ENCODE measurements at regions of chr15 and their contacts with region 1.

Region 1: DNA sequence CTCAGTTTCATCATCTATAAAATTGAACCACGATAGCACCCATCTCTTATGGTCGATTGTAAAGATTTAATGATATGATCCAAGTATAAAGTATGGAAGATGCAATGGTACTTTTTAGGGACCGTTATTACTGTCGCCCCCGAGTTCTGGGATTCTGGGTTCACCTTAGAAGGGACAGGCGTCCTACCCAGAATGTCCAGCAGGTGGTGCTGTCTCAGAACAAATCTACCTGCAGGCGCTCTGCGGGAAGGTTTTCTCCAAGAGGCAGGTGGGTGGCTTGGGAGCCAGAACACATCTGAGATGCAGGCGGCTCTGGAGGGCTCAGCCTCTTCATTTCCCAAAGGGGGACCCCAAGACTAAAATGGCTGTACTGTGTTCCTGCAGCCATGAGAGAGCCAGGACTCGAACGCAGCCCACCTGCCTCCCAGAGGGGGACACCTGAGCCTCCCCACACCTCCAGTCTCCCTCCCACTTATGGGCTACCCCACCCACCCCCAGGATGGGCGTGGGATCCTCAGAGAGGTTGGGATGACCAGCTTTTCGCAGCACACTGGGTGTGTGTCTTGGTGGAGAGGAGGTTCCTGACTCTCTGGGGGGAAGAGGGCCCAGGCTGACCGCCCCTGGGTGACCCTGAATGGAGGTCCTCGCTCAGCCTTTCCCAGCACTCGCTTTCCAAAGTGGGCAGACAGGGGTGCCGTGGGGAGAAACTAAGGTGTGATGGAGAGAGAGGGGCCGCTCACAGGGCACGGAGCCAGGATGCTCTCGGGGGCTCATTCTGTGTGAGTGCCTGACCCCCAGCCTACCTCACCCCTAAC is 28.1 kb upstream of the CORO2B start:
- DNase-seq: peak; percentile 74
- H3K4me3 ChIP-seq: peak overlapping the region in 1 of 2 experiments; percentile 34; a peak in 1 of 4 replicates
- H3K27ac ChIP-seq: no peak overlapping the region
- H3K4me1 ChIP-seq: peaks cover 4 to 5% of the 10 kb centered on the region in 2 experiments; a peak in 3 of 4 replicates
- H3K27me3 ChIP-seq: no peaks in the 10 kb centered on the region
- CTCF ChIP-seq: peak; percentile 92
- EP300 ChIP-seq: no peak
- RAD21 ChIP-seq: peak; percentile 80

Region 2: GRCh38 chr15:68106656-68107055 is 444.0 kb before region 1 on chr15:
- CTCF ChIA-PET with region 1: no interaction called
- POLR2A ChIA-PET with region 1: no interaction called
- DNase-seq: no peak
- H3K4me3 ChIP-seq: no peak overlapping the region; a peak in 1 of 4 replicates
- H3K27ac ChIP-seq: peak overlapping the region in 1 of 2 experiments; percentile 23; a peak in 2 of 4 replicates
- H3K4me1 ChIP-seq: peaks cover 0 to 8% of the 10 kb centered on the region in 2 experiments; a peak in 1 of 4 replicates
- H3K27me3 ChIP-seq: no peaks in the 10 kb centered on the region
- CTCF ChIP-seq: no peak
- EP300 ChIP-seq: no peak
- RAD21 ChIP-seq: no peak

Region 3: DNA sequence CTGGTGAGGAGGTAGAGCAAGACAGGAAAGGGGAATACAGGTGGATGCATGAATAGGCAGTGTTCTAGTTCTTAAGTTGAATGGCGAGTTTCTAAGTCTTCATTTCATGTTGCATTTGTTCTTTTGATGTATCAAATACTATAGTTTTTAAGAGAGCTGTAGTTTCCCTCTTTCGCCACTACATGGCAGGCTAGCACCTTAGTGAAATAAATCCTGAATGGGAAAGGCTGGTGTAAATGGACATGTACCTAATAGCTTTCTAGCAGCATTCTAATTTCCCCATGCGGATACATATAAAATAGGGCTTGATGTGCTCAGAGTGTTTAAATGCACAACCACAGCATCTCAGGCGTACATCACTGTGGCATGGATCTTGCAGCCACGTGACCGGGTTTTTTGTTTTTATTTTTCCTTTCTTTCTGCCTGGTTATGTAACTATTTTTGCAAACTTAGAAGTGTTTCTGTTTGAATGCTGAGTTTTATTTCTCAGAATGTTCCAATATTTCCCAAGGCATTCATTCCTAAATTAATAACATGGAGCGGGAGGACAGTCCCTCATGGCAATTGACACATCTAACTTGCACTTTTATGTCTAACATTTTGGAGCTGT is 297.7 kb before region 1 on chr15:
- CTCF ChIA-PET with region 1: interaction called, 10 read pairs
- POLR2A ChIA-PET with region 1: no interaction called
- DNase-seq: peak; percentile 75
- H3K4me3 ChIP-seq: no peak overlapping the region; a peak in 1 of 4 replicates
- H3K27ac ChIP-seq: no peak overlapping the region
- H3K4me1 ChIP-seq: no peaks in the 10 kb centered on the region
- H3K27me3 ChIP-seq: no peaks in the 10 kb centered on the region
- CTCF ChIP-seq: peak; percentile 94
- EP300 ChIP-seq: no peak
- RAD21 ChIP-seq: peak; percentile 93

Region 4: DNA sequence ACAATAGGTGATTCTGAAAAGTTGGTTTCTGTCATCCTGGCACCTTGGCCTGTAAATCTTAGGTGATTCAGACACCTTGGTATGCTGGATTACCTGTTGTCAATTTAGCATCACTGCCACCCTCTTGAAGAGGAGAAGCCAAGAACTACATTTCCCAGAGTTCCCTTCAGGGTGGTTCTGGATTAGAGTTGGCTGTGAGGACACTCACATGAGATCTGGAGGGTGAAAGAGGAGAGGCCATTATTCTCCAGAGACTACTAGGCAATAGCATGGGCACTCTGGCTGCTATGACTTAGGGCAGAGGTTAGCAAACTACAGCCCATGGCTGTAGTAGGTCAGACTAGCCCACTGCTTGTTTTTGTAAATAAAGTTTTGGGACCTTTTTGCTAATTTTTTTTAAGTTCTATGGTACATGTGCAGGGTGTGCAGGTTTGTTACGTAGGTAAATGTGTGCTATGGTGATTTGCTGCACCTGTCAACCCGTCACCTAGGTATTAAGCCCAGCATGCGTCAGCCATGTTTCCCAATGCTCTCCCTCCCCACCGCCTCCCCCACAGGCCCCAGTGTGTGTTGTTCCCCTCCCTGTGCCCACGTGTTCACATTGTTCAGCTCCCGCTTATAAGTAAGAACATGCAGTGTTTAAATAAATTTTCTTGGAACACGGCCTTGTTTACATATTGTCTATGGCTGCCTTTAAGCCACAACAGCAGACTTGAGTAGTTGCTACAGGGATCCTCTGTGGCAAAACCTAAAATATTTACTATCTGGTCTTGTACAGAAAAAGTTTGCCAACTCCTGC is 13.4 kb before region 1 on chr15:
- CTCF ChIA-PET with region 1: interaction called, 55 read pairs
- POLR2A ChIA-PET with region 1: no interaction called
- DNase-seq: no peak
- H3K4me3 ChIP-seq: no peak overlapping the region
- H3K27ac ChIP-seq: peak overlapping the region in 1 of 2 experiments; percentile 81; a peak in 2 of 4 replicates
- H3K4me1 ChIP-seq: peaks cover 0 to 4% of the 10 kb centered on the region in 2 experiments; a peak in 1 of 4 replicates
- H3K27me3 ChIP-seq: no peaks in the 10 kb centered on the region
- CTCF ChIP-seq: no peak
- EP300 ChIP-seq: no peak
- RAD21 ChIP-seq: no peak

Region 5: GRCh38 chr15:68578174-68578979 is 27.7 kb after region 1 on chr15:
- CTCF ChIA-PET with region 1: interaction called, 23 read pairs
- POLR2A ChIA-PET with region 1: no interaction called
- DNase-seq: peak; percentile 81
- H3K4me3 ChIP-seq: peak overlapping the region; percentile 52 to 78
- H3K27ac ChIP-seq: no peak overlapping the region
- H3K4me1 ChIP-seq: peaks cover 0 to 12% of the 10 kb centered on the region in 2 experiments; a peak in 1 of 4 replicates
- H3K27me3 ChIP-seq: no peaks in the 10 kb centered on the region
- CTCF ChIP-seq: peak; percentile 58
- EP300 ChIP-seq: no peak
- RAD21 ChIP-seq: peak; percentile 50

Region 6: DNA sequence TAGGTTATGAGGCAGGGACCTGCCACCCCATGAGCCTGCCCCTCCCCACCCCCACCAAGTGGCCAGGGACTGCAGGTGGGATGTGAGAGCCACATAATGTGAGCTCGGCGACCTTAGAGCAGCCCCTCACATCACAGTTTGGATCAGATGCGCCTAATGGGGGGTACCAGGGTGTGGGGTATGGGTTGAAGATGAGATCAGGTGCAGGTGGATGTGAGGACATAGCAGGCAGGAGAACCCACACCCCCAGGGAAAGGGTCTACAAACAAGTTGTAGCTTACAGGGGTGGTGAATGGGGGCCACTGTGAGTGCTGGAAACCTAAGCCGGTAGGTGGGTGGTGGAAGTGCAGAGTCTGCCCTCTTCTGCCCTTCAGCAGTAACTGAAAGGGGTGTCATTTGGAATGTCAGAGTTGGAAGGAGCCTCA is 122.1 kb after region 1 on chr15:
- CTCF ChIA-PET with region 1: interaction called, 464 read pairs
- POLR2A ChIA-PET with region 1: no interaction called
- DNase-seq: no peak
- H3K4me3 ChIP-seq: no peak overlapping the region
- H3K27ac ChIP-seq: no peak overlapping the region
- H3K4me1 ChIP-seq: no peaks in the 10 kb centered on the region; a peak in 1 of 4 replicates
- H3K27me3 ChIP-seq: no peaks in the 10 kb centered on the region
- CTCF ChIP-seq: peak; percentile 23; the same call in 1 of the 2 replicates
- EP300 ChIP-seq: no peak
- RAD21 ChIP-seq: peak; percentile 60

Region 7: DNA sequence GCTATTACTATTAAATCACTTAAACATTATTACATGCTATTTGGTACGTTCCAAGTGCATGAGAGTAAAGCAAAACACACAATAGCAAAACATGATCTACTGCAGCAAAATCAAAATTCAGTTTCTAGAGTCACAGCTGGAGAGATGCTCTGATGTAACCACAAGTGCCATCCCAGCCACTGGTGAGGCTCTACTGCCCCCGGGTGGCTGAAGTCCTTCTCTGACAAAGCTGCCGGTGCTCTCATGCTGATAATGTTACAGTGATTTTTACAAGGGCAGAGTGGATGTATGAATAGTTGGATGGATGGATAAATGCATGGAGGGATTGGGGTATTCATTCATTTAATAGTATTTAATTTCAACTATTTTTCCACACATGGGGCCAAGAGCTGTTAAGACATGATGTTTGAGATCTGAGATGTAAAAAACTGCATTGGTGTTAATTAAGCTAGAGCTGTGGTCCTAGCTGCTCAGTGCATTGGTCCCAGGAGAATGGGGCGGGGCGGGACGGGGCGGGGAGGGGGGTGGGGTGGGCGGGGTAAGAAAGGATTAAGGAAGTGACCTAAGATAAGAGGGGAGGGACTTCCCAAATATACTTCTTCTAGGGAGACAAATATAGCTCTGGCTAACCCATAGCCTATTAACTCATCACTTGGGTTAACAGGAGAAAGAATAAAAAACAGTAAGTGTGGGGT is 374.3 kb after region 1 on chr15:
- CTCF ChIA-PET with region 1: interaction called, 71 read pairs
- POLR2A ChIA-PET with region 1: no interaction called
- DNase-seq: peak; percentile 86
- H3K4me3 ChIP-seq: peak overlapping the region in 1 of 2 experiments; percentile 24; a peak in 1 of 4 replicates
- H3K27ac ChIP-seq: no peak overlapping the region
- H3K4me1 ChIP-seq: peaks cover 0 to 2% of the 10 kb centered on the region in 2 experiments; a peak in 1 of 4 replicates
- H3K27me3 ChIP-seq: peaks cover 9% of the 10 kb centered on the region; the same call in 1 of the 2 replicates
- CTCF ChIP-seq: peak; percentile 91
- EP300 ChIP-seq: no peak
- RAD21 ChIP-seq: peak; percentile 98